HEK293T (cell line): ENCODE measurements at regions of chr14 and their contacts with region 1.

Region 1: DNA sequence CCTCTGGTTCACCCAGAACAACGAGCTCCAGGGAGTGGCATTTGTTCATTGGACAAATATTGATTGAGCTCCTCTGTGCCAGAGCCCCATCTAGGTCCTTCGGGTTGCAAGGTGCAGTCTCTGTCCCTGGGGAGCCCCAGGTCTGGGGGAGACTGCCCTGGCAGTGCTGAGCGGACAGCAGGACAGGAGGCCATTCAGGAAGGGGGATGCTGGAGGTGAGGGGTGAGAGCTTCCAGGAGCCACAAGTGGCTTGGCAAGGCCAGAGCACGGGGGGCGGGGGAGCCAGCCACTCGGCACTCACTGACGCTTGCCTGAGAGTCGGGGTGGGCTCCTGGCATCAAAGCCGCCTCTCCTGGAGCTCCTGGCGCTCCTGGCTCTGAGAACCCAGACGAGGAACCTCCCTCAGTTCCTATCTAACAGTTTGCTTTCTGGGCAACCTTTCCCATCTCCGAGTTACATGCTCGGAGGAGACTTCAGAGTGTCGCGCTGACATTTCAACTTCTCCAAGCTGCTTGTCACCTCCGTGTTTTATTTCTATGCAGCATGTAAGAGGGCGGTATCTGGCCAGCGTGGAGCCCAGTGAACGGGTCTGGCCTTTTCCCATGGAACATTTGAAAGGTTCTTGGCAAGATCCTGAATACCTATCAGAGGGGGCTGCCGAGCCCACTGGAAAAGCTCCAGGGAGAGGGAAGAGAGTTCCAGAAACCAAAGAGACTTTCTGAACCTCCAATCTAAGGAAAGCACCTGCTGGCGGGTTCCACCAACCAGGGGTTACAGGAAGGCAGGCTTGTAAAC is 62.0 kb upstream of the BCL11B start:
- DNase-seq: no peak

Region 2: DNA sequence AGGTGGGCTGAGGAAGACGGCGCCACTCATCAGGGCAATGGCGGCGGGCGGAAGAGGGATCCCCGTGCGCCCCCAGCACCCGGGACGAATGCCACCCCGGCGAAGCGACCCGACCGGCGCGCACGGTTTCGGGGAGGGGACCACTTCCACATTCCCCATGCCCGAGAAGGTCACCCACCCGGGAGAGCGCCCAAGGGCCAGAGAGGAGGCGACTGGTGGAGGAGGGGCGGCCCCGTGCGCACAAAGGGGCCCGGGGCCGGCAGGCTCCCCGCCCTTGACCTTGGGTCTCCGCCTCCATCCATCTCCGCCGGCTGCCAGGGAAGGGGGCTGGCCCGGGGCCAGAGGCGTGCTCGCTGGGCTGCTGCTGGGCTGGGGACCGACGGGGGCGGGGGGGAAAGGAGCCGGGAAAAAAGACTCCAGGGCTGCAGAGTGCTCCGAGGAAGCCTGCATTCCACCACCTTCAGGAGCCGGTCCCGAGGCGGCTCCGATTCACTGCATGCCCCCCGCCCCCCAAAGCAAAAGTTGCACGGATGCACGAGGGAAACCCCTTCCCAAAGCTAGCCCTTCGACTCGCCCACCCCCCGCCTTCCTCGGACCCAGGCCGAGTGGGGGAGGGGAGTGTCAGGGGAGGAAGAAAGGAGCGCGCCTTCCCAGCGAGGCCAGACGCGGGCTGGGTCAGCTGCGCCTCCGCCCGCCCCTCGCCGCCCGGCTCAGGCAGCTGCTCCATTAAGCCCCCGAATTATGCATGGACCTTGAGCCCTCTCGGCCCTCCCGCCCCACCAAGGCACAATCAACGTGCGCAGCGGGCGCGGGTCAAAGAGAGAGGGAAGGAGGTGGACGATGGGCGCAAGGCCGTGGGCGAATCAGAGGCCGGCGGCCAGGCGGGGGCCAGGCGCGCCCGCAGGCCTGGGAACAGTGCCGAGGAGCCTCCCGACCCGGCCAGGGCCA is 88.2 kb before region 1 on chr14:
- CTCF ChIA-PET with region 1: no interaction called
- POLR2A ChIA-PET with region 1: no interaction called
- DNase-seq: peak; percentile 39

Region 3: DNA sequence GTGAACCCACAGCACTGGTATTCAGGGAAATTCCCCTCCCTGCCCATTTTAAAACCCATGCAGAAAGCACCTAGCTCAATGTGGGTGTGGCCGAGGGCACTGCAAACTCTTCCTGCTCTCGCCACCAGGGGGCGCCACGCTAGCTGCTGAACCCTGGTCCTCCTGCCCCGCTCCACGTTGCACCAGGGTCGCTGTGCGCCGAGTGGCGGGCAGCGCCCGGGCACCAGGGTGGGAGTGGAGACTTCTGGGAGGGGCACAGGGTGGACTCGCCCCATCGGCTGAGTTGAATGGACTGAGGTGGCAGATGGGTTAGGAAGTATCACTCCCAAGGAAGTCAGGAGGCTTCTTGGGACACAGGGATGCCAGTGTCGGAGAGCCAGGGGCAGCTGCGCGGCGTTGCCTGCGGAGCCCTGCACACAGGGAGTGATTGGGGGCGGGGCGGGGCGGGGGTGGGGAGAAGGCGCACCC is 13.9 kb before region 1 on chr14:
- CTCF ChIA-PET with region 1: interaction called, 14 read pairs
- POLR2A ChIA-PET with region 1: no interaction called
- DNase-seq: peak; percentile 88

Region 4: DNA sequence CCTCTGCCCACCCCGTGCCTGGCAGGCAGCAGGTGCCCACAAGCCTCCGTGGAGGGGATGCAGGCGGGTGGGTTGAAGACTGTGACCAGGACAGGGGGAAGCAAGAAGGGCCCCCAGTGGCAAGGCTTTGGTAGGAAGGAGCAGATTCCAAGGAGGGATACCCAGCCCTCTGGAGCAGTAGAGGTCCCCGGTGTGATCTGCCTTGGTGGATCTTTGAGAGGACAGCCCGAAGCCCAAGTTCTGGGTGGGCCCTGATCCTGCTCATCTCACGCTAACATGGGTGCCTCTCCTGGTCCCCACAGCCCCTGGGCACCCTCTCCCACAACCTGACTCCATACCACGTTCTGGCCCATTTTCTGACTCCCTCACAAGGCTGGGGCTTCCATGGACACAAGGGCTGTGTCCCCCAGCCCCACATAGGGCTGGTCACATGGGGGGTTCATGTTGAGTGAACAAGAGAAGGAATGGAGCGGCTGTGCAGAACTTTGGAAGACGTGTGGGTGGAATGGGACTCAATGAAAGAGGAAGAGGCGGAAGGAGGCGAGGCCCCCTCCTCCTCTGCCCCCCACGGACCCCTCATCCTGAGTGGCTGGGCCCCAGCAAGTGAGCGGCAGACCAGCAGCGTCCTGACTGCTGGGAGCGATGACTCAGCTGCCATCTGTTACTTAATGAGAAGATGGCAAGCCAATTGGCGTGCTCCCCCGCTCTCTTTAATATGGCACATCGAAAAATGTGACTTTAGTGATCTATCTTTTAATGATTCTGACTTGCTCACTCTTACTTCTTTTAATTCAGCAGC is 15.0 kb after region 1 on chr14:
- CTCF ChIA-PET with region 1: no interaction called
- POLR2A ChIA-PET with region 1: no interaction called
- DNase-seq: no peak